ENCODE measurements at regions of chr10 and their contacts with region 1.

Region 1: DNA sequence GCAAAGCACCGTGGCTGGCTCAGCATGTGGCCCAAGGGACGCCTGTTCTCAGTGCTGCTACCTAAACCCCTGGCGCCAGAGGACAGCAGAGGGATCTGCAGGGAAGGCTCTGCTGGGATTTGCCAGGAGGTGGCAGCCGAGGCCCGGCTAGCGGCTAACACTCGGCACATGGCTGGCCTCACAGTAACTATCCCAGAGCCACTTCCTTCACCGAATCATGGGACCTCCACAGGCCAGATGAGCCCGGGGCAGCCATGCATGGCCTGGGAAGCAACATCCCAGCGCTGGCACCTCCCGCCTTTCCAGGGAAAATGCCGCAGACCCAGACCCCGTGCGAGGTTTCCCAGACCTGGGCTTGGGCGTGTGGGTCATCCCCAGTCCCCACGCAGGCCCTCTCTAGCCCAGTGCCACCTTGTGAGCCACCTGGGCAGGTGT is 36.4 kb downstream of the DPYSL4 start:
- DNase-seq: peak; percentile 90 to 93 (median 92)
- H3K4me3 ChIP-seq: no peak overlapping the region
- H3K27ac ChIP-seq: no peak overlapping the region
- H3K4me1 ChIP-seq: peaks cover 0 to 5% (median 0%) of the 10 kb centered on the region in 3 donors
- H3K27me3 ChIP-seq: no peaks in the 10 kb centered on the region
- CTCF ChIP-seq: peak; percentile 94

Region 2: GRCh38 chr10:131792011-131792651 is 431.0 kb before region 1 on chr10:
- intact Hi-C with region 1: no loop called
- DNase-seq: peak in 3 of 5 donors; percentile 1 to 61 (median 16)
- H3K4me3 ChIP-seq: no peak overlapping the region
- H3K27ac ChIP-seq: no peak overlapping the region
- H3K4me1 ChIP-seq: no peaks in the 10 kb centered on the region
- H3K27me3 ChIP-seq: no peaks in the 10 kb centered on the region
- CTCF ChIP-seq: no peak

Region 3: DNA sequence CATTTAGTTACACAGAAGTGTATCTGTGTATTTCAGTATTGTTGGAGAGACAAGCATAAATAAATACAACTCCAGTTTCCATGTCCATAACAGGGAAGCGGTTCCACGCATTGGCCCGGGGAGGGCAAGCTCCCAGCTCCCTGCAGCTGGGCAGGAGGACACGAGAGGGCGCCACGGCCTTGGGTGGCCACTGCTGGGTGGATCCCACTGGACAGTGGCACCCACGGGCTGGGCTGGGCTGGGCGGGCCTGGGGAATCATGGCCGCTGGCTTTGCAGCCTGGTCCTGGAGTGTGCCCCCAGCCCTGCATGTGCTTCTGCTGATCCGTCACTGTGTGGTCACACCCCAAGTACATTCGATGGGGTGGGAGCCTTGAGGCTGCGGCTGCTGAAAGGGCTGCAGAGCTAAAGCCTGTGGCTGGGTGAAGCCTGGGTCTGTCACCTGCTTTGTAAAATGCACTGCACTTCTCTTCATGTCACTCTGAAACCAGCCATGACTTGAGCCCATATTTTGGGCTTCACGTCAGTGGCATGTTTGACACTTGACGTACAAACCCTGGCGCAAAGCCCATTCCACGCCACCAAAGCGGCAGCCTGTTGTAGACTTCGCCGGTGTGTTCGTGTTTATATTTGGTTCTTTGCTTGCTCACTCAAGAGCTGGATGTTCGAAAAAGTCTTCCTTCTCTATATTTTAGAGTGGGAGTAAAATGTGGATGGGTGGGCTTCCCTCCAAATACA is 136.3 kb after region 1 on chr10:
- intact Hi-C with region 1: loop called (anchors 10 kb)
- DNase-seq: peak in 1 of 5 donors; percentile 28
- H3K4me3 ChIP-seq: no peak overlapping the region
- H3K27ac ChIP-seq: no peak overlapping the region
- H3K4me1 ChIP-seq: no peaks in the 10 kb centered on the region
- H3K27me3 ChIP-seq: no peaks in the 10 kb centered on the region
- CTCF ChIP-seq: no peak